K562 (cell line): ENCODE measurements at regions of chr22 and their contacts with region 1.

Region 1: DNA sequence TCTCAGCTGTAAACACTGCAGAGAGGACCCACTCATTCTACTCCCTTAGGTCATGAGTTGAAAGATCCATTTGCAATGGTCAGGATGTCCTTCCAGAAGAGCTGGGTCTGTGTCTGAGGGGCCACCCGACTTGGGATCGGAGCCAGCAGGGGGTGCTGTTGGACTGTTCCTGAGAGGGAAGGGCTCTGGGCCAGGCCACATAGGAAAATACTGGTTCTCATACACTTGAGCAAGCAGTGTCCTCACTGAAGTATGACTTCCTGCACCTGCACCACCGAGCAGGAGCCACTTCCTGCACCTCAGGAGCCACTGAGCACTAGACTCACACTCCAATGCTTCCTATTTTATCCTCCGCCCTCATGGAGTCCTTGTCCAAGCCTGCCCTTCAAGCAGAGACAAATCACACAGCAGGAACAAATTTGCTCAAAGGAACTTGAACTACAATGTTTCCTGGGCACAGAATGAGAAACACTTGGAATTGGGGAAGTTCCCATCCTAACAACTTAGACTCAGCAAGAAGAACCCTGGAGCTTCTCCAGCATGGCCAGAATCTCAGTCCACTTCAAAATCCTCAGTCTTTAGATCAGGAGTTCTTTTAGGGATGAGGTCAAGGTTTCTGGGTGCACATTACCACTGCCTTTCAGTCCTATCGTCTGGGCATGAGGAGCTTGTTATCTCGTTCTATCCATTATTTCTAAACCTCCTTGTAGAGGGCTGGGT is 36.6 kb upstream of the VPREB1 start:
- DNase-seq: peak; percentile 96 to 98 (median 98)
- ATAC-seq: peak; percentile 94
- H3K4me3 ChIP-seq: no peak overlapping the region
- H3K27ac ChIP-seq: no peak overlapping the region
- H3K4me1 ChIP-seq: peaks cover 0 to 6% of the 10 kb centered on the region in 2 experiments; a peak in 2 of 5 replicates
- H3K27me3 ChIP-seq: peaks cover 48 to 50% of the 10 kb centered on the region in 2 experiments
- CTCF ChIP-seq: peak in 2 of 3 experiments; percentile 99 to 100; a peak in 4 of 6 replicates
- EP300 ChIP-seq: peak; percentile 38; the same call in 1 of the 2 replicates
- POLR2A ChIP-seq: no peak
- RAD21 ChIP-seq: peak in 1 of 2 experiments; percentile 99; a peak in 2 of 4 replicates

Region 2: DNA sequence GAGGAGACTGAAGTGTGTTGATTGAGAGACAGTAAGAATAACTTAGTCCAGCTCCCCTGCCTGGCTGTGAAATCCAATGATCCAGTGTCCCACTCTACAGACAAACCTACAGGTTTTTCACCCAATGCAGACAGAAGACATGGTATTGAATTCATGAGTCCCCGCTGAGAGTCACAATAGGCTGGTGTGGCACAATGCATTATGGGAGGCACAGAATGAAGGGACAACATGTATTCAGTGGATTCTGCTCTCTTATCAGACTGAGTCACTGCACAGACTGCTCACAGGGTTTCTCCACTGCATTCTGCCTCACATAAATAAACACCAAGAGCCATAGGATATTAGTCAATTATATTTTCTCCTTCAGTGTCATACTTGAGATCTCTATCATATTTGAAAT is 170.3 kb before region 1 on chr22:
- CTCF ChIA-PET with region 1: no interaction called
- POLR2A ChIA-PET with region 1: no interaction called
- in situ Hi-C with region 1: no loop called
- intact Hi-C with region 1: no loop called
- DNase-seq: peak; percentile 87 to 93 (median 88)
- ATAC-seq: peak; percentile 88
- H3K4me3 ChIP-seq: no peak overlapping the region
- H3K27ac ChIP-seq: no peak overlapping the region
- H3K4me1 ChIP-seq: peaks cover 0 to 13% of the 10 kb centered on the region in 2 experiments; a peak in 4 of 5 replicates
- H3K27me3 ChIP-seq: peaks cover 15 to 43% of the 10 kb centered on the region in 2 experiments; a peak in 4 of 5 replicates
- CTCF ChIP-seq: no peak
- EP300 ChIP-seq: no peak
- POLR2A ChIP-seq: no peak
- RAD21 ChIP-seq: no peak

Region 3: GRCh38 chr22:22103078-22103875 is 104.7 kb before region 1 on chr22:
- CTCF ChIA-PET with region 1: interaction called, 14 read pairs
- POLR2A ChIA-PET with region 1: interaction called, 3 read pairs
- in situ Hi-C with region 1: no loop called
- intact Hi-C with region 1: loop called (anchors 5 kb)
- DNase-seq: peak; percentile 86 to 97 (median 93)
- ATAC-seq: peak; percentile 87
- H3K4me3 ChIP-seq: no peak overlapping the region
- H3K27ac ChIP-seq: no peak overlapping the region
- H3K4me1 ChIP-seq: peaks cover 0 to 2% of the 10 kb centered on the region in 2 experiments; a peak in 2 of 5 replicates
- H3K27me3 ChIP-seq: peaks cover 21 to 37% of the 10 kb centered on the region in 2 experiments
- CTCF ChIP-seq: no peak
- EP300 ChIP-seq: no peak
- POLR2A ChIP-seq: no peak
- RAD21 ChIP-seq: no peak

Region 4: GRCh38 chr22:22195265-22196017 is 12.6 kb before region 1 on chr22:
- CTCF ChIA-PET with region 1: interaction called, 25 read pairs
- POLR2A ChIA-PET with region 1: interaction called, 13 read pairs
- in situ Hi-C with region 1: no loop called
- intact Hi-C with region 1: no loop called
- DNase-seq: peak; percentile 99 to 100 (median 100)
- ATAC-seq: peak; percentile 99
- H3K4me3 ChIP-seq: no peak overlapping the region
- H3K27ac ChIP-seq: no peak overlapping the region
- H3K4me1 ChIP-seq: peaks cover 0 to 3% of the 10 kb centered on the region in 2 experiments; a peak in 1 of 5 replicates
- H3K27me3 ChIP-seq: peaks cover 14 to 33% of the 10 kb centered on the region in 2 experiments; a peak in 4 of 5 replicates
- CTCF ChIP-seq: peak; percentile 100
- EP300 ChIP-seq: peak; percentile 69
- POLR2A ChIP-seq: no peak
- RAD21 ChIP-seq: peak; percentile 93 to 100

Region 5: GRCh38 chr22:22342697-22343580 is 134.9 kb after region 1 on chr22:
- CTCF ChIA-PET with region 1: interaction called, 23 read pairs
- POLR2A ChIA-PET with region 1: interaction called, 7 read pairs
- in situ Hi-C with region 1: no loop called
- intact Hi-C with region 1: loop called (anchors 5 kb)
- DNase-seq: peak; percentile 95 to 99 (median 98)
- ATAC-seq: peak; percentile 98
- H3K4me3 ChIP-seq: no peak overlapping the region
- H3K27ac ChIP-seq: no peak overlapping the region
- H3K4me1 ChIP-seq: no peaks in the 10 kb centered on the region
- H3K27me3 ChIP-seq: peaks cover 11 to 33% of the 10 kb centered on the region in 2 experiments; a peak in 3 of 5 replicates
- CTCF ChIP-seq: peak in 2 of 3 experiments; percentile 99 to 100; a peak in 4 of 6 replicates
- EP300 ChIP-seq: no peak
- POLR2A ChIP-seq: no peak
- RAD21 ChIP-seq: peak in 1 of 2 experiments; percentile 92; a peak in 2 of 4 replicates

Region 6: GRCh38 chr22:22576244-22576988 is 368.4 kb after region 1 on chr22:
- CTCF ChIA-PET with region 1: no interaction called
- POLR2A ChIA-PET with region 1: no interaction called
- in situ Hi-C with region 1: no loop called
- intact Hi-C with region 1: loop called (anchors 5 kb)
- DNase-seq: peak; percentile 96 to 98 (median 97)
- ATAC-seq: peak; percentile 96
- H3K4me3 ChIP-seq: no peak overlapping the region
- H3K27ac ChIP-seq: no peak overlapping the region
- H3K4me1 ChIP-seq: peaks cover 0 to 14% of the 10 kb centered on the region in 2 experiments; a peak in 3 of 5 replicates
- H3K27me3 ChIP-seq: peaks cover 48 to 60% of the 10 kb centered on the region in 2 experiments
- CTCF ChIP-seq: peak in 1 of 3 experiments; percentile 99; a peak in 2 of 6 replicates
- EP300 ChIP-seq: peak; percentile 75
- POLR2A ChIP-seq: no peak
- RAD21 ChIP-seq: peak in 1 of 2 experiments; percentile 89; a peak in 2 of 4 replicates

Region 7: DNA sequence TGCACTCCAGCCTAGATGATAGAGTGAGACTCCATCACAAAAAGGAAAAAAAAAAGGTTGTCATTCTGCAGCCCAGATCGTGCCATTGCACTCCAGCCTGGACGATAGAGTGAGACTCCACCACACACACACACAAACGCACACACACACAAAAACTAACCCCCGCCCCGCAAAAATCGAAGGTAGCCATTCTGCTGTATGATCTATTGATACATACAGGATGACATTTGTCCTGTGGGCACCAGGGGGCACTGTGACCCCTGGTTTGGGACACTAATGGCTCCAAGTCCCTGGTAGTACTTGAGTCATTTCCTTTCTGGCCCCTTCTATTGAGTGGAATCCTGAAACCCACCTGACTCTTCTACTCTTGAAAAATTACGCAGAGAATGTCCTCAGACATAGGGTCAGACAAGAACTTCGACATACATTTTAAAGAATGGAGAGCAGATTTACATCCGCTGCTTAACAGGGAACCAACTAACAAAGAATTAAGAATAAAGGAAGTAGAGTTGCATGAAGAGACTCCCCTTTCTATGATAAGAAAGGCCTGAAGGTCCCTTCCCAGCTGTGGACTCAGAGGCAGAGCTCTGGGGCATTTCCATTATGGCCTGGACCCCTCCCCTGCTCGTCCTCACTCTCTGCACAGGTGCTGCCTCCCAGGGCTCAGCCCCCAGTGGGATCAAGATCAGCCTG is 386.1 kb after region 1 on chr22:
- CTCF ChIA-PET with region 1: interaction called, 3 read pairs
- POLR2A ChIA-PET with region 1: no interaction called
- in situ Hi-C with region 1: loop called (anchors 5 kb)
- intact Hi-C with region 1: loop called (anchors 5 kb)
- DNase-seq: peak; percentile 94 to 100 (median 98)
- ATAC-seq: peak; percentile 95
- H3K4me3 ChIP-seq: no peak overlapping the region
- H3K27ac ChIP-seq: no peak overlapping the region
- H3K4me1 ChIP-seq: no peaks in the 10 kb centered on the region
- H3K27me3 ChIP-seq: peaks cover 31 to 47% of the 10 kb centered on the region in 2 experiments; a peak in 4 of 5 replicates
- CTCF ChIP-seq: no peak
- EP300 ChIP-seq: no peak
- POLR2A ChIP-seq: no peak
- RAD21 ChIP-seq: no peak

Region 8: DNA sequence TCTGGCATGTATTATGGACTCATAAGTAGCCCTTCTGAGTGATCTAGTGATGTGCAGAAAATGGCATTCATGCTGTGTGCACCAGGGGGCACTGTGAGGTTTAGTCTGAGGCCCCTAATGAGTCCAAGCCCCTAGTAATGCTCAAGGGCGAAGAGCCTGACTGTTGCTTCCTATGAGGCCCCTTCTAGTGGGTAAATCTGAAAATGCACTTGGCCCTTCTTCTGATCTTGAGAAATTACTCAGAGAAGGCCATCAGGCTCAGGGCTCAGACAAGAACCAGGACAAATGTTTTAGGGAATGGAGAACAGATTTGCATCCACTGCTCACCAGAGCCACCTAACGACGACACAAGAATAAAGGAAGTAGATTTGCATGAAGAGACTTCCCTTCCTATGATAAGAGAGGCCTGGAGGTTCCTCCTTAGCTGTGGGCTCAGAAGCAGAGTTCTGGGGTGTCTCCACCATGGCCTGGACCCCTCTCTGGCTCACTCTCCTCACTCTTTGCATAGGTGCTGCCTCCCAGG is 512.3 kb after region 1 on chr22:
- CTCF ChIA-PET with region 1: no interaction called
- POLR2A ChIA-PET with region 1: no interaction called
- in situ Hi-C with region 1: no loop called
- intact Hi-C with region 1: loop called (anchors 5 kb)
- DNase-seq: peak; percentile 93 to 96 (median 94)
- ATAC-seq: peak; percentile 97
- H3K4me3 ChIP-seq: no peak overlapping the region
- H3K27ac ChIP-seq: no peak overlapping the region
- H3K4me1 ChIP-seq: peaks cover 0 to 25% of the 10 kb centered on the region in 2 experiments; a peak in 3 of 5 replicates
- H3K27me3 ChIP-seq: peaks cover 0 to 12% of the 10 kb centered on the region in 2 experiments; a peak in 2 of 5 replicates
- CTCF ChIP-seq: no peak
- EP300 ChIP-seq: no peak
- POLR2A ChIP-seq: no peak
- RAD21 ChIP-seq: no peak